ENCODE measurements at regions of chr12 and their contacts with region 1.

Region 1: DNA sequence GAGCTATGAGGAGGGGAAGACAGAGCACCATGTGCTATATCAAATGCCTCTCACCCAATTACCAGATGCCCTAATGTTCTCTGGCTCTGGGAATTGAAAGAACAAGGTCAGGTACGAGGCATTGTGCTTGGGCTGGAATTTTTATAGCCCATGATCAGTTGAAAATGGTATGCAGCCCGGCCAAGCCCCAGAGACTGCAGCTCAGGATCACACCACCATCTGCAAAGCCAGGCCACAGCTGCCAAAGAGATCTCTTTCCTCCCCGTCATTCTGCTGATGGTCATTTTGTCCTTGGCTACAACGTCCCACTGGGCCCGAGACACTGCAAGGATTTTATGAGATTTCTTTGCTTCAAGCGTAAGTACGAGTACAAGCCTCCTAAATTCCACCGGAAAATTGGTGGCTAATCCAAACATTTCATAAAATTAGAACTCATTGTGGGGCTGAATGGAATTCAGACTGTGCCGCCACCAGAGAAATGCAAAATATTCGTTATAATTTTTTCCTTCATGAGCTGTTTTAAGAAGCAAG is 15.1 kb downstream of the NUAK1 start:
- DNase-seq: peak; percentile 57
- H3K4me3 ChIP-seq: no peak overlapping the region
- H3K27ac ChIP-seq: peak overlapping the region; percentile 28 to 30
- H3K4me1 ChIP-seq: peaks cover 6% of the 10 kb centered on the region
- H3K27me3 ChIP-seq: no peaks in the 10 kb centered on the region
- CTCF ChIP-seq: no peak
- POLR2A ChIP-seq: no peak

Region 2: DNA sequence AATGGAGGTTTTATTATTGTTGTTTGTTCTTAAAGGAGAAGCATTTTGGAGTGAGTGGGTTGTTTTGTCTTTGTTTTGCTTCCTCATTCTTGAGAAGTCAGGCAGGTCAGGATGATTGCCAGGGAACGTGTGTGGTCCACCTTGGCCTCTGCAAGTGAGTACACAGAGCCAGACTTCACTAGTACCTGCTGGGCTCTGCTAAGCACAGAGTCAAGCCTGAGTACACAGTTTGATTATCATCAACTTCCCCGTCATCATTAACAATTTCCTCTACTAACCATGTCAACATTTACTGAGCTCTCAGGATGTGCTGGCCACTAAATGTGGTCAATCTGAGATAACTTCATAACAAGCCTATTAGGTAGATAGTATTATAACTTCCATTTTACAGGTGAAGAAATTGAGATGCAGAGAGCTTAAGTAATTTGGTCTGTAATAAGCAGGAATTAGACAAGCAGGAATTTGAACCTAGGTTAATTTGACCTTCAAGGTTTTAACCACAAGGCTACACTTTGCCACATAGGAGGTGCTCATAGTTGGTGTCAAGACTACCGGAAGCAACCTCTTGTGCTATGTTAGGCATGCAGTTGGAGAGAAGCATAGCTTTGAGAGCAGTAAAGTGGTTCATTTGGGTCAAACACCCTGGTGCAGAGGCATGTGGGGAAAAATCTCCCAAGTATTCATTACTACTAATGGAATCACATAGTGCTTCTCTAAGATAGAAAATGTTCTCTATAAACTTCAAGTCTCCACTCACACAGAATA is 163.1 kb before region 1 on chr12:
- intact Hi-C with region 1: loop called (anchors 10 kb)
- DNase-seq: peak; percentile 64
- H3K4me3 ChIP-seq: no peak overlapping the region
- H3K27ac ChIP-seq: no peak overlapping the region
- H3K4me1 ChIP-seq: no peaks in the 10 kb centered on the region
- H3K27me3 ChIP-seq: no peaks in the 10 kb centered on the region
- CTCF ChIP-seq: no peak
- POLR2A ChIP-seq: no peak

Region 3: DNA sequence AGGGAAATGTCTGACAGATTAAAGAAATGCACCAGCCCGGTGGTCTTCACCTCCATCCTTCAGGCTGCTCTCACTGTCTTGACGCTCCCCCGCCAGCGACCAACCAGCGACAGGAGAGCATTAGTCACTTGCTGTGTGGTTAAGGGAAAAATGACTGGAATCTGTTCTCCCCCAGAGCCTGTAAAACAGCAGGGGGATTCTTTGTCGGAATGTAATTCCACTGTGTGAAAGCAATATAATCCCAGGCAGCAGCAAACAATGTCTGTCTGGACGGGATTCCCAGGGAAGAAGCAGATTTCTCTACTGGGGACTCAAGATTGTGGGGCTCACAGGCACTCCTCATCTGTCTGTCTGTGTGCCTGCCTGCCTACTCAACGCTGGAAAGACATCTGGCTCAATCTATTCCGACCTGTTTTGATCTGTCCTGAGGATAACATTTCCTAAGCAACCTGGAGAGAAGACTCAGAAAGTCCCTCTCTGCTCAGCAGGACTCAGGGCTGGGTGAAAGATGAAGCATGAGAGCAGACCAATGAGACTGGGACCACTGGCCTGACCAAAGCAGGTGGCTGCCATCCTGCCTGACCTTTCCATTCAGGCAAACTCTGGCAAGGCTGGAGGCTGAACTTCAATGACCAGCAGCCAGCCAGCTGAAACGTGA is 39.5 kb before region 1 on chr12:
- intact Hi-C with region 1: no loop called
- DNase-seq: no peak
- H3K4me3 ChIP-seq: no peak overlapping the region
- H3K27ac ChIP-seq: no peak overlapping the region
- H3K4me1 ChIP-seq: no peaks in the 10 kb centered on the region
- H3K27me3 ChIP-seq: no peaks in the 10 kb centered on the region
- CTCF ChIP-seq: no peak
- POLR2A ChIP-seq: no peak

Measured in prostate gland (tissue), 2 donors.